Activated CD4-positive, alpha-beta T cell treated with anti-CD3 and anti-CD28 coated beads, Interleukin-2, amount 10 ng/mL, durations not matched to agents 7 days and 5 days (primary cell): ENCODE measurements at regions of chr2 and their contacts with region 1.

Region 1: DNA sequence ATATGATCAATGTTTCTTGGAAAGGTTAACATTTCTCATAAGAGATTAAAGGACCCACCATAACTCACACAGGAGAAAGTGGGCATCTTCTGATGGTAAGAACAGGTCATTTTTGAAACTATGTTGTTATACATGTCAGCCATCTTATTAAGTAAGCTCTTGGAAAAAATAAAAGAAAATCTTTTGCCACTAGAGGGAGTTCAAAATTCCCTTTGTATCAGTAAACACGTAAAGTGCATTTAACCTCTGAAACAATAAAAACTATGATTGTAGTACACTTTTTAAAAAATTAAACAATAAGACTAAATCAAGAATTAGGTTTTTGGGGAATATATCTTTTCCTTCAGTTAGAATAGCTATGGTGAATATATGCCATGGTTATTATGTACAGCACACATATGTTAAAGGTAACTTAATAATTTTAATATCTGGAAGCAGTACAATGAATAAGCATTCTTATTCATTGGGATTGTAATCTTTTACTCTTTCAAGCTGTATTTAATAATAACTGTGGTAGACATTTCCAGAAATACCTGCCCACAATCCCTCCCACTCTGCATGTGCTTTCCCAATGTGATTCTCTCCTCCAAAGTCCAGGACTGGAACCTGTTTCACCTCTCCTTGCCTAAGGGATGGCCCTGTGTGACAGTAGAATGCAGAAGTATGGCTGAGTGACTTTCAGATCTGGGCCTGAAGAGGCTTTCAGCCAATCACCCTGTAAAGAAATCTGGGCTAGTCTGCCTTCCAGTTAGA is 64.2 kb downstream of the RBMS1 start:
- DNase-seq: no peak
- H3K4me3 Mint-ChIP-seq: no peak overlapping the region
- H3K27ac Mint-ChIP-seq: peak overlapping the region; percentile 67
- H3K4me1 Mint-ChIP-seq: peaks cover 70% of the 10 kb centered on the region
- H3K27me3 Mint-ChIP-seq: no peaks in the 10 kb centered on the region

Region 2: DNA sequence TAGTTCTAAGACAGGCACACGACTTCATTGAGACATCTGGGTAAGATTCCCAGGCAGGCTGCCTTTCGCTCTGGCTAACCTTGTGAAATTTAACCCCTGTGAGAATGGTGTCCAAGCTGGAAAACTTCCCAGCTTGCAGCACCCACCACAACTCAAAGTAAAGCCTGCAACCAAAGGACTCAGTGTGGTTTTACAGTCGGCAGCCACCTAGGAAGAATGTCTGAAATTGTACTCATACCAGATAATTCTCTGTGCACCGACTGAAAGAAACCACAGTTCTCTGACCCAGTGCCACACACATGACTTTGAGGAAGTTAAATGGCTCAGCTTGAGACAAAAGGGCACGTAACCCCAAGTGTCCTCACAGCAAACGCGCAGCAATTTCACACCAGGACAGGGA is 61.5 kb before region 1 on chr2:
- CTCF ChIA-PET with region 1: no interaction called
- POLR2A ChIA-PET with region 1: no interaction called
- DNase-seq: no peak
- H3K4me3 Mint-ChIP-seq: no peak overlapping the region
- H3K27ac Mint-ChIP-seq: no peak overlapping the region
- H3K4me1 Mint-ChIP-seq: peaks cover 54% of the 10 kb centered on the region
- H3K27me3 Mint-ChIP-seq: no peaks in the 10 kb centered on the region

Region 3: GRCh38 chr2:160457588-160457987 is 28.2 kb after region 1 on chr2:
- CTCF ChIA-PET with region 1: interaction called, 10 read pairs
- POLR2A ChIA-PET with region 1: no interaction called
- DNase-seq: no peak
- H3K4me3 Mint-ChIP-seq: no peak overlapping the region
- H3K27ac Mint-ChIP-seq: no peak overlapping the region
- H3K4me1 Mint-ChIP-seq: peaks cover 46% of the 10 kb centered on the region
- H3K27me3 Mint-ChIP-seq: no peaks in the 10 kb centered on the region

Region 4: DNA sequence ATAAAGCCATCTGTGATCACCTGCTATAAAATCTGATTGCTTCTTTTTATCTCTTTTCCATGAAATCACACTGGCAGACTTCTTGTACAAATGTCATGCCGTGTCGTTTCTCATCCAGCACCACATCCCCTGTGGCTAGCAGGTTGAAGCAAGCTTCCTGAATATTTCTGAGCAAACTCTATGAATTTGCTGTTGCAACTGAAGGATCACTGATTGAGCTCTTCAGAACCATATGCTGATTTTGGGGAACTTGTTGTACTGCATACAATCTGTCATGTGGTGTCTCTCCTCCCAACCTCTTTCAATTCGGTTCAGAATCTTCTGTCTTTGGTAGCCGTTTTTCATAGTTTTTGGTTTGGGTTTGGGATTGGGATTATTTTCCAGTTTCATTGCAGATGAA is 121.8 kb after region 1 on chr2:
- CTCF ChIA-PET with region 1: no interaction called
- POLR2A ChIA-PET with region 1: no interaction called
- DNase-seq: no peak
- H3K4me3 Mint-ChIP-seq: no peak overlapping the region
- H3K27ac Mint-ChIP-seq: no peak overlapping the region
- H3K4me1 Mint-ChIP-seq: no peaks in the 10 kb centered on the region
- H3K27me3 Mint-ChIP-seq: no peaks in the 10 kb centered on the region

Region 5: DNA sequence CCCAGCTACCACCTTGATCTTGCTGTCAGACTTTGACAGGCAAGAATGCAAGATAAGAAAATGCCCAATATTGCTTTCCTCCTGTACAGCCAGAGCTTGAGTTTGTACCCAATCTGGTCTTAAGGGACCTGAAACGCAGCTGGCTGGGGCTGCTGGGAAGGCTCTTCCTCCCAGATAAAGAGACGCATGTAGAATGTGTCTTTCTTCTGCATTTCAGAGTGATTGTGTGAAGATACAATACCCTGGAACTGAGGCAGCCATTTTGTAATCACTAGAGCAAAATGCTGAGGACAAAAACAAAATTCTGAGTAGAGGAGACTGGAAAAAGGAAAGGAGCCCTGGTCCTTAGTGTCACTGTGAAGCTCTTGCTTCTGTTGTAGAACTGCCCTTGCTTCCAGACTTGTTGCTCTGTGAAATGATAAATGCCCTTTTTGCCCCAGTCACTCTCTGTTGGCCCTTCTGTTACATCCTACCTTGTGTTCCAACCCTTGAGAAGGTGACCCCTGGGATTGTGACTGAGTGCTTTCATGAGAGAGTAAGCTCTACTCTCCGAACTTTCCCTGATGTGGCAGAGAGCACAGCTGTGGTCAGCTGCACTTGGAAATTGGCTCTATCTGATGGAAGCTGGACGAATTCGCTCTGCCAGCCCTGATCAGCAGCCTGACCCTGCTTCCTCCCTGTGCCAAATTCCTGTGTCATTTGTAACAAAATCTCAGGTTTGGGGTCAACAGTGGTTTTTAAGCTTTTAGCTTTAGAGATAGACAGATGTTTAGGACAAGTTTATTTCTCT is 201.6 kb after region 1 on chr2:
- CTCF ChIA-PET with region 1: no interaction called
- POLR2A ChIA-PET with region 1: no interaction called
- DNase-seq: no peak
- H3K4me3 Mint-ChIP-seq: no peak overlapping the region
- H3K27ac Mint-ChIP-seq: no peak overlapping the region
- H3K4me1 Mint-ChIP-seq: no peaks in the 10 kb centered on the region
- H3K27me3 Mint-ChIP-seq: no peaks in the 10 kb centered on the region